OCI-LY7 (cell line): ENCODE measurements at regions of chr12 and their contacts with region 1.

Region 1: GRCh38 chr12:98296462-98297079 is 218.8 kb upstream of the TMPO start:
- DNase-seq: no peak
- H3K4me3 ChIP-seq: no peak overlapping the region
- H3K27ac ChIP-seq: no peak overlapping the region
- H3K4me1 ChIP-seq: no peaks in the 10 kb centered on the region
- CTCF ChIP-seq: no peak

Region 2: GRCh38 chr12:98319716-98320425 is 23.3 kb after region 1 on chr12:
- CTCF ChIA-PET with region 1: no interaction called
- POLR2A ChIA-PET with region 1: interaction called, 12 read pairs
- intact Hi-C with region 1: no loop called
- DNase-seq: no peak
- H3K4me3 ChIP-seq: no peak overlapping the region
- H3K27ac ChIP-seq: no peak overlapping the region
- H3K4me1 ChIP-seq: peaks cover 24% of the 10 kb centered on the region
- CTCF ChIP-seq: no peak

Region 3: GRCh38 chr12:99567072-99567471 is 1270.5 kb after region 1 on chr12:
- CTCF ChIA-PET with region 1: no interaction called
- POLR2A ChIA-PET with region 1: no interaction called
- intact Hi-C with region 1: no loop called
- DNase-seq: no peak
- H3K4me3 ChIP-seq: no peak overlapping the region
- H3K27ac ChIP-seq: no peak overlapping the region
- H3K4me1 ChIP-seq: peaks cover 5% of the 10 kb centered on the region
- CTCF ChIP-seq: no peak